PC-3 (cell line): ENCODE measurements at regions of chr17 and their contacts with region 1.

Region 1: GRCh38 chr17:39730095-39730921 is at the start of gene MIEN1:
- DNase-seq: peak; percentile 79
- ATAC-seq: peak; percentile 84
- H3K4me3 ChIP-seq: peak within 1 kb of the TSS; percentile 79
- H3K27ac ChIP-seq: peak within 1 kb of the TSS; percentile 38
- H3K4me1 ChIP-seq: peaks cover 4% of the 10 kb centered on the region; the same call in 1 of the 2 replicates
- H3K27me3 ChIP-seq: no peaks in the 10 kb centered on the region
- CTCF ChIP-seq: peak; percentile 65
- total RNA-seq, gene MIEN1: 52.0 and 57.8 TPM in 2 replicates

Region 2: GRCh38 chr17:38786372-38786771 is 943.9 kb before region 1 on chr17:
- CTCF ChIA-PET with region 1: no interaction called
- POLR2A ChIA-PET with region 1: interaction called, 12 read pairs
- intact Hi-C with region 1: no loop called
- DNase-seq: peak; percentile 81
- ATAC-seq: peak; percentile 91
- H3K4me3 ChIP-seq: no peak overlapping the region
- H3K27ac ChIP-seq: peak overlapping the region; percentile 47
- H3K4me1 ChIP-seq: peaks cover 17% of the 10 kb centered on the region
- H3K27me3 ChIP-seq: no peaks in the 10 kb centered on the region
- CTCF ChIP-seq: no peak

Region 3: DNA sequence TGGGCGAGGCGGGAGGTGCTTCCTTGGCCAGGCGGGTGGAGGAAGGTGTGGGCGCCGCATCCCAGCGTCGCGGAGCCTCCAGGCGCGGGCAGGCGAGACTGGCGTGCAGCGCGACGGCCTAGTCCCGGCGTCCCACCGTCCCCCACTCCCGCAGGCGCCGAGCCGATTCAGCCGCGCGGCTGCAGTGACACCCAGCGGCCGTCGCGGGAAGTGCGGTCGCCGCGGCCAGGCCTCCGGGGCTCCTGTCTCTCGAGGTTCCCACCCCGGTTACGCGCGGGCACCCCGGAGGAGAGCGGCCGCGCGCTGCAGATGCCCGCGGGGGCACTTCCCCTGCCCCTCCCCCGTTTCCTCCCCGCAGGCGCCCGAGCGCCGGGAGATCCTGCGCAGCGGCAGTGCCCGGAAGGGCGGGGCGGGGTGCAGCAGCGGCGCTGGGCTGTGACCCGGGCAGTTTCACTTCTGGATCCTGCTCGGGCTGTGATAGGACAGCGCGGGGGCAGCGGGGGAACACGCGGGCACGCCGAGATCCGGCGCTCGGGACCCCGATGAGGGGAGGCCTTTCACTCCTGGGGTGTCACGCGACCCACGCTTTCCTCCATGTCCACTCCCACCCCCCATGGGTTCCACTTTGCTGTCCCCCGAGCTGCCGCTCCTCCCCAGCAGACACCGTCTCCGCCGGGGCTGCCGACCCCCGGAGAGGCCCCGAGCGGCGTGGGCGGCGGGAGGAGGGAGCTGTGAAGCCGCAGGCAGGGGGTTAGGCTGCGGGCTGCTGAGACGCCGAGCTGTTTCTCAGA is 24.0 kb after region 1 on chr17:
- CTCF ChIA-PET with region 1: no interaction called
- POLR2A ChIA-PET with region 1: no interaction called
- intact Hi-C with region 1: loop called (anchors 2 kb)
- DNase-seq: peak; percentile 89
- ATAC-seq: peak; percentile 92
- H3K4me3 ChIP-seq: peak overlapping the region; percentile 75
- H3K27ac ChIP-seq: peak overlapping the region; percentile 43; the same call in 1 of the 2 replicates
- H3K4me1 ChIP-seq: peaks cover 6% of the 10 kb centered on the region; the same call in 1 of the 2 replicates
- H3K27me3 ChIP-seq: no peaks in the 10 kb centered on the region
- CTCF ChIP-seq: peak; percentile 67